A673 (cell line): ENCODE measurements at regions of chr11 and their contacts with region 1.

Region 1: GRCh38 chr11:37280200-37280599 is 682.2 kb upstream of the RAG2 start:
- DNase-seq: peak; percentile 45
- H3K4me3 ChIP-seq: no peak overlapping the region
- H3K27ac ChIP-seq: peak overlapping the region; percentile 100
- H3K4me1 ChIP-seq: peaks cover 61% of the 10 kb centered on the region
- H3K27me3 ChIP-seq: no peaks in the 10 kb centered on the region
- CTCF ChIP-seq: no peak

Region 2: DNA sequence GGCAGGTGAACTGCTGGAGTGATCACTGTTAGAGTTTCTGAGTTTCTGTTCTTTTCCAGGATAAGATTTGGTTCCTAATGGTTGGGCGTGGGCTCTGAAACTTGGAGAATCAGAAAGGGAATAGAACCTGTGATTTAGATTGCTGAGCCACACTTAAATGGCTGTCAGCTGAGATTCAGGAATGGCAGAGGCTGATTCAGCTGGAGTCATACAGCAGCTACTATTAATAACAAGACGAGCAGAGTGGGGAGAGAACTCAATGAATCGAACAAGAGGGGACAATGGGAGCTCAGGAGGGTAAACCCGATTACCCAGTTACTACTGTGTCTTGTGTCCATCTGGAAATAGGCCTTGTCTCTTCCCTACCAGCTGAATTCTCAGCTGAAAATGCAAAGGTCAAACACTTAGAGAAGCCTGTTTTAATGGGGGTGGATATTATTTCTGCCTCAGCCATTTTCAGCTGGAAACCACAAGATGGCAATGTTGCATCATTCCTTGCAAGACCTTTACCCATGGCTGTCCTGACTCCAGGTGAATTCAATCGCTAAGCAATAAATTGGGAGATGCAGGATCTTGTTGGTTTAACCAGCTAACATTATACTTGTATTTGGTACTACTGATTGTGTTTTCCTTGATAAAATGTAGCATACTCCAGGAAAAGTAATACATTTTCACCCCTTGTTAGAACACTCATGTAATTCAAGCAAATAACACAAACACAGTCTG is 577.7 kb before region 1 on chr11:
- CTCF ChIA-PET with region 1: no interaction called
- POLR2A ChIA-PET with region 1: no interaction called
- intact Hi-C with region 1: loop called (anchors 5 kb)
- DNase-seq: peak; percentile 92
- H3K4me3 ChIP-seq: no peak overlapping the region
- H3K27ac ChIP-seq: no peak overlapping the region
- H3K4me1 ChIP-seq: peaks cover 15% of the 10 kb centered on the region
- H3K27me3 ChIP-seq: no peaks in the 10 kb centered on the region
- CTCF ChIP-seq: peak; percentile 99

Region 3: DNA sequence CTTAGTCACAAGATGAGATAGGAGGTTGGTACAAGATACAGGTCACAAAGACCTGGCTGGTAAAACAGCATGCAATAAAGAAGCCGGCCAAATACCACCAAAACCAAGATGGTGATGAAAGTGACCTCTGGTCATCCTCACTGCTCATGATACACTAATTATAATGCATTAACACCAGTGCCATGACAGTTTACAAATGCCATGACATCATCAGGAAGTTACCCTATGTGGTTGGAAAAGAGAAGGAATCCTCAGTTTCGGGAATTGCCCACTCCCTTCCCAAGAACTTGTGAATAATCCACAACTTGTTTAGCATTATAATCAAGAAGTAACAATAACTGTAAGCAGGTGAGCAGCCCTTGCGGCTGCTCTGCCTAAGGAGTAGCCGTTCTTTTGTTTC is 273.6 kb before region 1 on chr11:
- CTCF ChIA-PET with region 1: interaction called, 14 read pairs
- POLR2A ChIA-PET with region 1: no interaction called
- intact Hi-C with region 1: loop called (anchors 1 kb)
- DNase-seq: no peak
- H3K4me3 ChIP-seq: no peak overlapping the region
- H3K27ac ChIP-seq: no peak overlapping the region
- H3K4me1 ChIP-seq: peaks cover 25% of the 10 kb centered on the region
- H3K27me3 ChIP-seq: no peaks in the 10 kb centered on the region
- CTCF ChIP-seq: no peak

Region 4: DNA sequence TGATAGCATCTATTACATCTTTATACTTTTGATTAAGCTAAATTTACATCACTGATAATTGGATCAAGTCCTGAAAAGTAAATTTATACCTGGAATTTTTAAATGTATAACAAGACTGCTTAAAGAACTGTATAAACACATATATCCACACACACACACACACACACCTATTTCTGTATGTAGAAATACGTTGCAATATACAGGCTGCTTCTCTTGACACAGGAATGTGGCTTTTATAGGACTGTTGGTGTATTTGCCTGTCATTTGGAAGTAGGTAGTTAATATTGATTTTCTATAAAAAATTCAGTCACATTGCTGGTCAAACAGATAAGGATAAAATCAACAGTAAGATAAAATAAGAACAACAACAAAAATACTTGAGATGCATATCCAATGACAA is 26.4 kb after region 1 on chr11:
- CTCF ChIA-PET with region 1: no interaction called
- POLR2A ChIA-PET with region 1: no interaction called
- intact Hi-C with region 1: loop called (anchors 1 kb)
- DNase-seq: no peak
- H3K4me3 ChIP-seq: no peak overlapping the region
- H3K27ac ChIP-seq: no peak overlapping the region
- H3K4me1 ChIP-seq: no peaks in the 10 kb centered on the region
- H3K27me3 ChIP-seq: no peaks in the 10 kb centered on the region
- CTCF ChIP-seq: no peak

Region 5: DNA sequence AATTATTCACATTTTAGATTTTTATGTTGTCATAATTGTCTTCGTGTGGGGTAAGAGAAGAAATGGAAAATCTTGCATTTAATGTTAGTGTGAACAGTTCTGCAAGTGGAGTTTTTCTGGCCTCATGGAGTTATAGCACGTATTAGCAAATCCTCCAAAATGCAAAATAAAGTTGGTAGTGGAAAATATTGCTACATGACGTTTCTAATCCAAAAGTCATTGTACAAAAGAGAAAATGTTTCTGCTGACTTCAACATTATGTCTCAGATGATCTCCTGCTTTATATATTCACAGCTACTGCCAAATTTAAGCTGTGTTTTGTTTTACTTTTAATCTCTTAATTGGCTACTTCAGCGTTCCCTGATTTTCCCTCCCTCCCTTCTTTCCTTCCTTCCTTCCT is 1121.9 kb after region 1 on chr11:
- CTCF ChIA-PET with region 1: no interaction called
- POLR2A ChIA-PET with region 1: no interaction called
- intact Hi-C with region 1: loop called (anchors 5 kb)
- DNase-seq: peak; percentile 77
- H3K4me3 ChIP-seq: no peak overlapping the region
- H3K27ac ChIP-seq: peak overlapping the region; percentile 83
- H3K4me1 ChIP-seq: peaks cover 24% of the 10 kb centered on the region
- H3K27me3 ChIP-seq: no peaks in the 10 kb centered on the region
- CTCF ChIP-seq: no peak

Region 6: DNA sequence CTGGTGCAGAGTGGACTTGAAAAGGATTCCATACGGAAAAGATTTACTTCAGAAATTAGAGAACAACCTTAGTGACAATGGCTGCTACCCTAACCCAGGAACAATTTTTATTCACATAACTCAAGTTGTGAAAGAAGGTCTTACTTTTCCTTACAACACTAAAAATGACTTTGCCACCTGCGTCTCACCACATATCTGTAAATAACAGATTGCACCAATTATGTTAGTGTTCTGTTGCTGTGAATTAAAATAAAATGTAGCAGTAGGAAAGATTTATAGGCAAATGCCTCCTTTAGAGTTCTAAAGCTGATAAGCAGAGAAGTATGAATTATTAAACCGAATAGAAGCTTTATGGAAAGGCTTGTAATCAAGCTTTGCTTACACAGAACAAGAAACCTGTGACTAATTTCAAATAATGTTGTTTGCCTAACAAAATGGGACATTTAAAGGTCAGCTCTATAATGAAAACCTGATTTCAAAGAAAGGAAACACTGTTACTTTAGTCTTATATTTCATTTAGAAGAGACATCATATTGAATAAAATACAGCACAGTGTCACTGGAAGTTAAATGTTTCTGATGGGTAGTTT is 1941.4 kb after region 1 on chr11:
- CTCF ChIA-PET with region 1: no interaction called
- POLR2A ChIA-PET with region 1: no interaction called
- intact Hi-C with region 1: loop called (anchors 1 kb)
- DNase-seq: peak; percentile 79
- H3K4me3 ChIP-seq: no peak overlapping the region
- H3K27ac ChIP-seq: peak overlapping the region; percentile 98
- H3K4me1 ChIP-seq: peaks cover 40% of the 10 kb centered on the region
- H3K27me3 ChIP-seq: no peaks in the 10 kb centered on the region
- CTCF ChIP-seq: no peak